ENCODE measurements at regions of chr1 and their contacts with region 1.

Region 1: DNA sequence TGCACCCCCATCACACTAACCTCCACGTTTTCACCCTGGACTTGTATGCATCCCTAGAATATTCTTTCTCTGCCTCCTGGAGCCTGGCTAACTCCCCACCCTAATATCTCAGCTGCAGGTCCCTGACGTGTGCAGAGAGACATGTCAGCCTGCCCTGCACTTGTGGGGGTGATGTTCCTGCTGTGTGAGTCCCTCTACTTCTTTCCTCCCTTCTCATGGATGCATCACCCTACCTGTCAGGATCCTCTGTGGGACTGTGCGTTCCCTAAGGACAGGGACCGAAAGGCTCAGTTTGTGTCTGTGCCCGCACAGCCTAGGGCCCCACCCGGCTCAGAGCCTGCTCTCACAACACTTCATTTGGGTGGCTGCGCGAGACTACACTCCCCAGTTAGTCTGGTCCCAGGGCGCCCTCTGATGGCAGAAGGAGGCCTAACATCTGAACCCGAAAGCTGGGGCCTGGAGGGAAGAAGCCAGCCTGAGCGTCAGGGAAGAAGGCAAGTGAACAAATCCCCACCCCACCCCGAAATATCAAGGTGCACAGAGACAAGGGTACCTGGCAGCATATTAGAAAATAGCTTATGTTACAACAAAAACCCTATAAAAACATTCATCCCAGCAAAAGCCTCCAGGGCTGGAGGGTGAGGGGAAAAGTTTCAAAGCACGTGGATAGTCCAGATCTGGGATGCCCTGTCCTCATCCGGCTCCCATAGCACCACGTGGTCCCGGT is 3.7 kb downstream of the CD52 start:
- DNase-seq: peak; percentile 84 to 98 (median 96)

Region 2: GRCh38 chr1:26279456-26280332 is 41.8 kb before region 1 on chr1 and contains the start of gene SH3BGRL3:
- intact Hi-C with region 1: loop called (anchors 2 kb)
- DNase-seq: peak; percentile 76 to 97 (median 88)

Region 3: GRCh38 chr1:26284597-26285360 is 36.7 kb before region 1 on chr1:
- intact Hi-C with region 1: loop called (anchors 1 kb)
- DNase-seq: peak in 6 of 10 donors; percentile 50 to 90 (median 62)